Aorta (tissue), 5 donors: ENCODE measurements at regions of chr22 and their contacts with region 1.

Region 1: GRCh38 chr22:27212617-27213177 is 555.3 kb downstream of the MIAT start:
- DNase-seq: peak in 1 of 2 donors; percentile 84
- ATAC-seq: peak; percentile 86
- H3K4me3 ChIP-seq: no peak overlapping the region
- H3K27ac ChIP-seq: peak overlapping the region in 1 of 2 donors; percentile 91
- H3K4me1 ChIP-seq: peaks cover 2 to 4% of the 10 kb centered on the region in 2 donors
- H3K27me3 ChIP-seq: no peaks in the 10 kb centered on the region

Region 2: GRCh38 chr22:27170491-27170890 is 42.2 kb before region 1 on chr22:
- intact Hi-C with region 1: loop called in 1 of 2 experiments (anchors 2 kb)
- DNase-seq: peak; percentile 87 to 90
- ATAC-seq: peak; percentile 91
- H3K4me3 ChIP-seq: no peak overlapping the region
- H3K27ac ChIP-seq: peak overlapping the region in 1 of 2 donors; percentile 87
- H3K4me1 ChIP-seq: peaks cover 0 to 3% of the 10 kb centered on the region in 2 donors
- H3K27me3 ChIP-seq: no peaks in the 10 kb centered on the region